ENCODE measurements at regions of chr16 and their contacts with region 1.

Region 1: GRCh38 chr16:67979955-67980678 is at the start of gene DPEP3:
- DNase-seq: no peak
- H3K4me3 Mint-ChIP-seq: no peak within 1 kb of the TSS
- H3K27ac Mint-ChIP-seq: no peak within 1 kb of the TSS
- H3K4me1 Mint-ChIP-seq: peaks cover 15% of the 10 kb centered on the region
- H3K27me3 Mint-ChIP-seq: no peaks in the 10 kb centered on the region
- total RNA-seq, gene DPEP3: not detected in 2 replicates

Region 2: GRCh38 chr16:67822511-67822910 is 157.6 kb before region 1 on chr16:
- intact Hi-C with region 1: no loop called
- DNase-seq: no peak
- H3K4me3 Mint-ChIP-seq: no peak overlapping the region
- H3K27ac Mint-ChIP-seq: no peak overlapping the region
- H3K4me1 Mint-ChIP-seq: no peaks in the 10 kb centered on the region
- H3K27me3 Mint-ChIP-seq: no peaks in the 10 kb centered on the region

Region 3: DNA sequence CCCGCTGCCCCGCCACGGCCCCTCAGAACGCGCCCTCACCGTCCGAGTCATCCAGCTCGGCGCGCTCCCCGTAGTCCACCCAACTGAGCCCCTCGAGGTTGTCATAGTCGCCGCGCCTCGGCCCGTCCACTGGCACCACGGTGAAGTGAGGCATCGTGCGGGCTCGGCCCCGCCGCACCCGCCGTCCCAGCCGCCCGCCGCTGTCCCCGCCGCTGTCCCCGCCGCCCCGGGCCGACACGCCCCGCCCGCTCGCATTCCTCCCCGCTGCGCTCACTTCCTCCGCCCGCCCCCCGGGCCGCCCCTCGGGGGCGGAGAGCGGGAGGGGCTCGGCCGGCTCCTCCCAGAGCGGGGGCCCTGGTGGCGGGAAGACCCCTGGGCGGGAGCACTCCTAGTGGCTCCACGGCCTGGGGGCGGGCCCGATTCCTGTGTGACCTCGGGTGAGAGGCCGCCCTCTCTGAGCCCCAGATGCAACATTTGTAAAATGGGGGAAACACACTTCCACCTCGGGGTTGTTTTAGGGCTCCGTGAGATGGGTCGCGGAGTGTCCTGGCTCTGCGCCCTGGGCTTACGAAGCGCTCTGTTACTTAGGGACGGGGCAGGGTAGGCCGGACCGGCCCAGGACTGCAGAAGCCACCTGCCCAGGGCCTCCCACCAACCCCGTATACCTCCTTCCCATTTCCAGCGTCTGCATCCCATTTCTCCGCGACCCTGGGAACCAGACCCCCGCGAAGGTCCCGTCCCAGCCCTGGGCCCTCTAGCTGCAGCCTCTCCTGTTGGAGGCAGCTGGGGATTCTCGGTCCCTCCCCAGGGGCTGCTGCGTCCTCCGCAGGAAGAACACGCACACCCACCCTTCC is 11.5 kb before region 1 on chr16 and contains the start of gene SLC12A4:
- intact Hi-C with region 1: loop called (anchors 2 kb)
- DNase-seq: peak; percentile 86
- H3K4me3 Mint-ChIP-seq: peak within 1 kb of the TSS; percentile 100
- H3K27ac Mint-ChIP-seq: peak within 1 kb of the TSS; percentile 88
- H3K4me1 Mint-ChIP-seq: peaks cover 27% of the 10 kb centered on the region
- H3K27me3 Mint-ChIP-seq: no peaks in the 10 kb centered on the region
- total RNA-seq, gene SLC12A4: 46.2 and 47.1 TPM in 2 replicates

Region 4: GRCh38 chr16:67993189-67994039 is 13.3 kb after region 1 on chr16:
- intact Hi-C with region 1: loop called (anchors 1 kb)
- DNase-seq: peak; percentile 80
- H3K4me3 Mint-ChIP-seq: peak overlapping the region; percentile 79
- H3K27ac Mint-ChIP-seq: peak overlapping the region; percentile 99
- H3K4me1 Mint-ChIP-seq: peaks cover 30% of the 10 kb centered on the region
- H3K27me3 Mint-ChIP-seq: no peaks in the 10 kb centered on the region

Region 5: DNA sequence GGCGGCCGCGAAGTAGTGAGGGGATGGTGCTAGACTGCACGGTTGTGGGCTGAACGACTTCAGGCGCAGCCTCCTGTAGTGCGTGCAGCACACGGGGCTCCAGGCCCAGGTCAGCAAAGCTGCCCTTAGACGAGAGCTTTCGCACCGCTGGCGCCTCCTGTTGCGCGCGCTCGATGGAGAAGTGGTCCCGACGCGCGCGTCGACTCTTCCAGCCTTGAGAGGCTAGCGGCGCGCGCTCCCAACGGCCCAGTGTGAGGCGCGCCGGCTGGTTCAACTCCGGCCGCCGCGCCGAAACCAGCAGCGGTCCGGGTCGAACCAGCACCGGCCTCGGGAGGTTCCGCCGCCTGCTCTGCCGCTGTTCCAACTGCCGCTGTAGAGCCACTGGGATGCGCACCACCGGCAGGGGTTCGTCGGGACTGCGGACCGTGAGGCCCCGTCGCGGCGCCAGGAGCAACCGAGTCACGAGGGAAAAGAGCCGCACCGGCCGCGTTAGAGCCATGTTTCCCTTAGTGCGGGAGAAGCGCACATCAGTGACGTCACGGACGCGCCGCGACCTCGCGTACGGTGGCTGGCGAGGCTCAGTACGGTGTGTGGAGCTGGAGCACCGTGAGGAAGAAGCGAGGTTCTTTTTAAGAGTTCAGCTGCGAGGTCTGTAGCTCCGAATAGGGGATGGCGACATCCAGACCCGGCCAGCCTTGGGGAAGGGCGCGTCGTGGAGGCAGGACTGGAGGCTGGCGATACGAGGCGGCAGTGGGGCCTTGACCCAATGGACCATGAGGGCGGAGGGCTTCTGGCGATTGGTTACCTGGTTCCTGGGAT is 42.8 kb after region 1 on chr16 and contains the starts of genes DDX28 and DUS2:
- intact Hi-C with region 1: loop called (anchors 5 kb)
- DNase-seq: peak; percentile 93
- H3K4me3 Mint-ChIP-seq: peak within 1 kb of the TSS; percentile 96
- H3K27ac Mint-ChIP-seq: peak within 1 kb of the TSS; percentile 100
- H3K4me1 Mint-ChIP-seq: peaks cover 17% of the 10 kb centered on the region
- H3K27me3 Mint-ChIP-seq: no peaks in the 10 kb centered on the region
- total RNA-seq, gene DDX28: 19.3 TPM in 2 replicates
- total RNA-seq, gene DUS2: 31.2 and 34.3 TPM in 2 replicates

Measured in activated T-helper 2 cell treated with anti-CD3 and anti-CD28 coated beads, Interferon-gamma antibody, Interleukin-2, Interleukin-4, amounts not matched to agents 10 μg/mL and 5 μg/mL and 100 μg/mL, durations not matched to agents 14 hours and 24 hours and 36 hours (primary cell).